Heart right ventricle (tissue), 16 donors: ENCODE measurements at regions of chr3 and their contacts with region 1.

Region 1: GRCh38 chr3:52238761-52239701 is at the start of gene TWF2:
- DNase-seq: peak; percentile 75 to 87
- ATAC-seq: peak; percentile 76 to 93 (median 82)
- H3K4me3 ChIP-seq: peak within 1 kb of the TSS; percentile 76 to 99 (median 93)
- H3K27ac ChIP-seq: peak within 1 kb of the TSS; percentile 83 to 96 (median 93)
- H3K4me1 ChIP-seq: peaks cover 22 to 71% (median 49%) of the 10 kb centered on the region in 9 donors
- H3K27me3 ChIP-seq: no peaks in the 10 kb centered on the region
- CTCF ChIP-seq: peak in 8 of 9 donors; percentile 14 to 64 (median 48)
- total RNA-seq, gene TWF2: 71.5 to 148 (median 99.1) TPM

Region 2: DNA sequence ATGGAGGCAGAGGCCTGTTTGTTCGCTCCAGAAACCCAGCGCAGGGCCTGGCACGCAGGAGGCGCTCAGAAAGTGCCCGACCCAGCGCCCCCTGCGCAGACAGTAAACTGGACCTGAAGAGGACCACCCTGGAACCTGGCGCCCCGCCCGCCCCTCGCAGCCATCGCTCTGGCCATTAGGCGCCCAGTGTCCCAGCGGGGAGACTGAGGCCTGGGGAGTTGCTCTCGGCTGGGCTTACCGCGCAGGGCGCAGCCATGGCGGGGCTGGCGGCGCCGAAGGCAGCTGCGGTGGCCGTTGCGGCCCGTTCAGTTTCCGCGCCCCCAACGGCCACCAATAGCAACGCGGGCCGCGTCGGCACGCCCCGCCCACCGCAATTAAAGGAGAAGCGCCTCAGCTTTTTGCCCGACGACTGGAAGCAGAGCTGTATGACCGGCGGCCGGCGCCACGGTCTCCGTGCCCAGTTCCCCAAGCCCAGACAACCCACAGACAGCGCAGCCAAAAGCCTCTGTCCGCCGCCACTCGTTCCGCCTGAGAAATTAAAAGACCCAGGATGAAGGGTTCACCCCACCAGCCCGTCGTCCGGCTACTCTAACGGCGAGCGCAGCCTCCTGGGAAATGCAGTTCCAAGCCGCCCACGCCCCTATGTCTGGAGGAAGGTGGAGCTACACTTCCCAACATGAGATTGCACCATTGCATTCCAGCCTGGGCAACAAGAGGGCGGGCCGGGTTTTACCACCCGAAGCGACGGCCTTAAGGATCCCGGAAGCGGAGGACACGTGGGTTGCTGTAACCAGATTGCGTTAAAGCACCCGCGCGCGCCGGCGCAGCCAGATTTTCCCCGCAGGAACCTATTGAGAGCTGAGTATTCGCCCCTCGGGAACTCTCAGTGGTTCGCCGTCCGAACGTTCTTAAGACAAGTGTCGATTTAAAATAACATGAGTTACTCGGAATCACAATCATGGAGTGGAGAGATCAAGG is 84.6 kb before region 1 on chr3 and contains the start of gene POC1A:
- intact Hi-C with region 1: no loop called
- DNase-seq: peak; percentile 92 to 97
- ATAC-seq: peak; percentile 97 to 99 (median 98)
- H3K4me3 ChIP-seq: peak within 1 kb of the TSS; percentile 49 to 77 (median 66)
- H3K27ac ChIP-seq: peak within 1 kb of the TSS; percentile 64 to 94 (median 88)
- H3K4me1 ChIP-seq: peaks cover 4 to 19% (median 10%) of the 10 kb centered on the region in 9 donors
- H3K27me3 ChIP-seq: no peaks in the 10 kb centered on the region
- CTCF ChIP-seq: peak in 4 of 9 donors; percentile 12 to 22 (median 16)
- total RNA-seq, gene POC1A: 0.60 to 3.5 (median 1.1) TPM

Region 3: DNA sequence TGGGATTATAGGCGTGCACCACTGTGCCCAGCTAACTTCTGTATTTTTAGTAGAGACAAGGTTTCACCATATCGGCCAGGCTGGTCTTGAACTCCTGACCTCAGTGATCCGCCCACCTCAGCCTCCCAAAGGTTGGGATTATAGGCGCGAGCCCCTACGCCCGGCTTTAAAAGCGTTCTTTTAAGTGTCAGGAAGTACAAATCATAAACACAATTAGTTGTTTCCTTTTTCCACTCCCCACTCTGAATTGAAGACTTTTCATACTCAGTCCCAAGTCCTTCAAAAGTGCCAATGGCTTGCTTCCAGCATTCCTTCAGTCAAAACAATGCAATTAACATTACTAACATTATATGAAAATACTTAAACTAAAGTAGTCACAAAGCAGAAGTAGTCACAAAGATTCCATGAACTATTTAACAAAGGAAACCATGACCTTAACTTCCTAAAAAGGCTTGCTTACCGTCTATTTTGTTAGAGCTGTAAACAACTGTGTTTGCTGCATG is 31.3 kb after region 1 on chr3:
- intact Hi-C with region 1: loop called in 7 of 10 experiments (anchors 5 kb)
- DNase-seq: no peak
- ATAC-seq: peak in 7 of 8 donors; percentile 24 to 71 (median 52)
- H3K4me3 ChIP-seq: peak overlapping the region in 1 of 10 donors; percentile 8
- H3K27ac ChIP-seq: peak overlapping the region in 8 of 10 donors; percentile 37 to 89 (median 52)
- H3K4me1 ChIP-seq: peaks cover 0 to 82% (median 74%) of the 10 kb centered on the region in 9 donors
- H3K27me3 ChIP-seq: no peaks in the 10 kb centered on the region
- CTCF ChIP-seq: no peak

Region 4: GRCh38 chr3:52278510-52279069 is 39.6 kb after region 1 on chr3 and contains the start of gene WDR82:
- intact Hi-C with region 1: loop called in 8 of 10 experiments (anchors 2 to 5 kb)
- DNase-seq: peak; percentile 97 to 99
- ATAC-seq: peak; percentile 95 to 97 (median 97)
- H3K4me3 ChIP-seq: peak within 1 kb of the TSS; percentile 58 to 95 (median 87)
- H3K27ac ChIP-seq: peak within 1 kb of the TSS; percentile 91 to 100 (median 97)
- H3K4me1 ChIP-seq: peaks cover 3 to 73% (median 57%) of the 10 kb centered on the region in 9 donors
- H3K27me3 ChIP-seq: no peaks in the 10 kb centered on the region
- CTCF ChIP-seq: peak in 8 of 9 donors; percentile 27 to 74 (median 63)
- total RNA-seq, gene WDR82: 59.0 to 78.4 (median 71.6) TPM

Region 5: DNA sequence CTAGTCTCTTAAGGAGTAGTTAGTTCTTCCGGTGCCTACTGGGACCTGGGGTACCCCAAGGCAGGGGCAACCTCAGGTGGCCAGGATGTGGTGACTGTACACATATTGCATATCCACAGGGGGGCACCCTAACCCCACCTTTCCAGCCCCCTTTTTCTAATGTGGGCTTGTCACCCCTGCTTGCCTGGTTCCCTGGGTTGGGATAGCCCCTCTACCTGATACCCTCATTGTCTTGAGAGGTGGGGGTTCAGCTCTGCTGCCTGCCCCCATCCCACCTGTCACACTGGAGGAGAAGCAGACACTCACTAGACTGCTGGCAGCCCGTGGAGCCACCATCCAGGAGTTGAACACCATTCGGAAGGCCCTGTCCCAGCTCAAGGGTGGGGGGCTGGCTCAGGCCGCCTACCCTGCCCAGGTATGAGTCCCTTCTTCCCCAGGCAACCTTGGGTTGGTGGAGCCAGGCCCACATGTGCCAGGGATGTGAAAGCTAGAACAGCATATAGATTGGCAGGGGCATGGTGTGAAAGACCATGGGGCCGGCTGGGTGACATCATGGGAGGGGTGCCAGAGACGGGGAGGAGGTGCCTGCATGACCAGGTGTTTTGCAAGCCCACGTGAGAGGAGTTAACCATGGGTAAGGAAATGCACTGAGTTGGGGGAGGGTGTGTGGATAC is 52.6 kb after region 1 on chr3:
- intact Hi-C with region 1: loop called in 2 of 10 experiments (anchors 5 kb)
- DNase-seq: peak in 1 of 2 donors; percentile 33
- ATAC-seq: no peak
- H3K4me3 ChIP-seq: no peak overlapping the region
- H3K27ac ChIP-seq: no peak overlapping the region
- H3K4me1 ChIP-seq: peaks cover 5 to 23% (median 14%) of the 10 kb centered on the region in 9 donors
- H3K27me3 ChIP-seq: no peaks in the 10 kb centered on the region
- CTCF ChIP-seq: peak in 8 of 9 donors; percentile 32 to 65 (median 58)

Region 6: DNA sequence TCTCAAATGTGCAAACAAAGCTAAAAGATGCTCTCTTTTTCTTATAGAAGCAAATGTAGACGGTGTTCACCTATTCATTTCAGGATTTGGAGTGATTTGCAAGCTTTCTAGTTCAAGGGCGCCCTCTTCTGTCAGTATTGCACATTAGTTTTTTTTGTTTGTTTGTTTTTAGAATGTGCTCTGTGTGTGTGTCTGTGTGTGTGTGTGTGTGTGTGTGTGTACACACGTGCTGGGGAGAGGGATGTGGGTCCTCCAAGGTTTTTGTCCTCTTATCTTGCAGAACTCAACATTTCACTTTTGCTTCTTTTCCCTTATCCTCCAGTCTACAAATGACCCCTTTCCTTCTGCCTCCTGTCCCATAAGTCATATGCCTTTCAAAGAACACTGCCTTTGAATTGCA is 100.6 kb after region 1 on chr3:
- intact Hi-C with region 1: loop called in 3 of 10 experiments (anchors 5 kb)
- DNase-seq: peak in 1 of 2 donors; percentile 58
- ATAC-seq: peak in 5 of 8 donors; percentile 37 to 54 (median 47)
- H3K4me3 ChIP-seq: no peak overlapping the region
- H3K27ac ChIP-seq: no peak overlapping the region
- H3K4me1 ChIP-seq: no peaks in the 10 kb centered on the region
- H3K27me3 ChIP-seq: no peaks in the 10 kb centered on the region
- CTCF ChIP-seq: peak; percentile 35 to 83 (median 77)

Region 7: DNA sequence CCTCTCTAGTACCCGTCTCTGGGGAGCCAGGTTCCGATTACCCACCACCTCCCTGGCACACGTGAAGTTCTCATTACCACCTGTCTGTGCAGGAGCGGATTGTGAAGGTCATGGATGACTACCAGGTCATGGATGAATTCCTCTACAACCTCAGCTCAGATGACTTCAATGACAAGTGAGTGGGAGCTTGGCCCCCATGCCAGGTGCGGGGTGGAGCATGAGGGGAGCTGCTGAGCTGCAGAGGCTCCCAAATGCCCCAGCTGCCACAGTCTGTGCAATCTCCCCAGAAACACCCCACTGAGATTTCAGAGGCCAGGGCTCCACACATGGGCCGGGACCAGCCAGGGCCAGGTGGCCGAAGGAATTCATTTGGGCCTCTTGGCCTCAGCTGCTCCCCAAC is 111.4 kb after region 1 on chr3:
- intact Hi-C with region 1: no loop called
- DNase-seq: no peak
- ATAC-seq: no peak
- H3K4me3 ChIP-seq: no peak overlapping the region
- H3K27ac ChIP-seq: no peak overlapping the region
- H3K4me1 ChIP-seq: peaks cover 0 to 25% (median 7%) of the 10 kb centered on the region in 9 donors
- H3K27me3 ChIP-seq: no peaks in the 10 kb centered on the region
- CTCF ChIP-seq: no peak

Region 8: DNA sequence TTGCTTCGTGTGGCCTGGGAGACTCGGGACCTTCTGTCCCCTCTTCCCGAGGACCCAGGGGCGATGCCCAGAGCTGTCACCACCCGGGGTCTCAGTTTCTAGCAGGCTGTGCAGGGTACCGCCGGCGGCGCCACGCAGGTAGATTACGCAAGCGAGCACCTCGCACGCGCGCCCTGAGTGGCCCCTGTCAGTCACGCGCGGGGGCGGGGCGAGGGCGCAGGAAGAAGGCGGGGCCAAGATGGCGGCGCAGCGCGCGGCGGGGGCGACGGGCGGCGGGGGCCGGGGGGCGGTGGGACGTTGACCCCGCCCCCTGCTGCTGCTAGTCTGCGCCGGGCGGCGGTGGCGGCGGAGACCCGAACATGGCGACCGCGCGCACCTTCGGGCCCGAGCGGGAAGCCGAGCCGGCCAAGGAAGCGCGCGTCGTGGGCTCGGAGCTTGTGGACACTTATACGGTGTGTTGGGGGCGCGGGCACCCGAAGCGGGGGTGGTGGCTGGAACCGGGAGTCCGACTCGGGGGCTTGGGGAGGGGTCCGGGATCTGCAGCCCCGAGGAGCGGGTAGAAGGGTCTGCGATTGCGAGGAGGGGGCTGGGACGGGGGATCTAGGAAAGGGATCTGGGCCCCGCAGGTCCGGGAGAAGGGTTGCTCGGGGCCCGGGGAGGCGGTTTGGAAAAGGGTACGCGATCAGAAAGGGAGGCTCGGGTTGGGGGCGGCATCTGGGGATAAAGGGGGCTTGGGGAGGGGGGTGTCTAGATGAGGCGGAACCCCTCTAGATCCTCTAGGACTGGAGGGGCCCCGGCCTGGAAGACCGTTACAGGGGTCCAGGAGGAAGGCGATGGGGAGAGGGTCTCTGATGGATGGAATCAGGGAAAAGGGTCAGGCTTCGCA is 216.5 kb after region 1 on chr3 and contains the start of gene NISCH:
- intact Hi-C with region 1: loop called in 1 of 10 experiments (anchors 10 kb)
- DNase-seq: peak; percentile 92 to 95
- ATAC-seq: peak; percentile 29 to 77 (median 58)
- H3K4me3 ChIP-seq: peak within 1 kb of the TSS; percentile 65 to 96 (median 80)
- H3K27ac ChIP-seq: peak within 1 kb of the TSS; percentile 88 to 99 (median 92)
- H3K4me1 ChIP-seq: peaks cover 17 to 41% (median 31%) of the 10 kb centered on the region in 9 donors
- H3K27me3 ChIP-seq: no peaks in the 10 kb centered on the region
- CTCF ChIP-seq: no peak
- total RNA-seq, gene NISCH: 35.3 to 56.3 (median 41.9) TPM